Caco-2 (cell line): ENCODE measurements at regions of chr1 and their contacts with region 1.

Region 1: GRCh38 chr1:67149179-67149770 is 14.5 kb upstream of the C1orf141 start:
- DNase-seq: peak; percentile 64 to 68
- H3K4me3 ChIP-seq: no peak overlapping the region
- H3K4me3 Mint-ChIP-seq: no peak overlapping the region
- H3K27ac Mint-ChIP-seq: no peak overlapping the region
- H3K4me1 ChIP-seq: peaks cover 7% of the 10 kb centered on the region; the same call in 1 of the 2 replicates
- H3K4me1 Mint-ChIP-seq: no peaks in the 10 kb centered on the region
- H3K27me3 ChIP-seq: no peaks in the 10 kb centered on the region
- H3K27me3 Mint-ChIP-seq: peaks cover 8% of the 10 kb centered on the region
- CTCF ChIP-seq: peak; percentile 55 to 61

Region 2: GRCh38 chr1:66996018-66996682 is 153.1 kb before region 1 on chr1:
- CTCF ChIA-PET with region 1: interaction called, 43 read pairs
- POLR2A ChIA-PET with region 1: interaction called, 3 read pairs
- intact Hi-C with region 1: loop called (anchors 1 kb)
- DNase-seq: peak; percentile 42
- H3K4me3 ChIP-seq: no peak overlapping the region
- H3K4me3 Mint-ChIP-seq: no peak overlapping the region
- H3K27ac Mint-ChIP-seq: no peak overlapping the region
- H3K4me1 ChIP-seq: no peaks in the 10 kb centered on the region
- H3K4me1 Mint-ChIP-seq: no peaks in the 10 kb centered on the region
- H3K27me3 ChIP-seq: no peaks in the 10 kb centered on the region
- H3K27me3 Mint-ChIP-seq: no peaks in the 10 kb centered on the region
- CTCF ChIP-seq: peak; percentile 43 to 62

Region 3: DNA sequence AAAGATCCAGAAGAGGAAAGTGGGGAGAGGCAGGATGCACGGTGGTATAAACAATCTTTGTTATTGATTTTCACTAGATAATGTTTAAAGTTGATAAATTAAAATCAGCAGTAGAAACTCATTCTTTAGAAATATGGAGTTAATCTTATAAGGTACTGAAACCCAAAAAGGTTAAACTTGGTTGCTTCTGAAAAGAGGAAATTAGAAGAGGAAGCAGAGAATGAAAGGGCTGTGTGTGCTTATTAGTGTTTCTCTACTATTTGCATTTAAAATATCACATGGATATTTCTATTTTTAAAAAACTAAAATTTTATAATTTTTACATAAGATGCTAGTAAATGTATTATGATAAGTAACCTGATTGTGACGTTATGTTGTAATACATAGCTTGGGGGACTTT is 38.9 kb before region 1 on chr1:
- CTCF ChIA-PET with region 1: no interaction called
- POLR2A ChIA-PET with region 1: no interaction called
- intact Hi-C with region 1: no loop called
- DNase-seq: no peak
- H3K4me3 ChIP-seq: no peak overlapping the region
- H3K4me3 Mint-ChIP-seq: no peak overlapping the region
- H3K27ac Mint-ChIP-seq: no peak overlapping the region
- H3K4me1 ChIP-seq: no peaks in the 10 kb centered on the region
- H3K4me1 Mint-ChIP-seq: no peaks in the 10 kb centered on the region
- H3K27me3 ChIP-seq: no peaks in the 10 kb centered on the region
- H3K27me3 Mint-ChIP-seq: no peaks in the 10 kb centered on the region
- CTCF ChIP-seq: no peak

Region 4: DNA sequence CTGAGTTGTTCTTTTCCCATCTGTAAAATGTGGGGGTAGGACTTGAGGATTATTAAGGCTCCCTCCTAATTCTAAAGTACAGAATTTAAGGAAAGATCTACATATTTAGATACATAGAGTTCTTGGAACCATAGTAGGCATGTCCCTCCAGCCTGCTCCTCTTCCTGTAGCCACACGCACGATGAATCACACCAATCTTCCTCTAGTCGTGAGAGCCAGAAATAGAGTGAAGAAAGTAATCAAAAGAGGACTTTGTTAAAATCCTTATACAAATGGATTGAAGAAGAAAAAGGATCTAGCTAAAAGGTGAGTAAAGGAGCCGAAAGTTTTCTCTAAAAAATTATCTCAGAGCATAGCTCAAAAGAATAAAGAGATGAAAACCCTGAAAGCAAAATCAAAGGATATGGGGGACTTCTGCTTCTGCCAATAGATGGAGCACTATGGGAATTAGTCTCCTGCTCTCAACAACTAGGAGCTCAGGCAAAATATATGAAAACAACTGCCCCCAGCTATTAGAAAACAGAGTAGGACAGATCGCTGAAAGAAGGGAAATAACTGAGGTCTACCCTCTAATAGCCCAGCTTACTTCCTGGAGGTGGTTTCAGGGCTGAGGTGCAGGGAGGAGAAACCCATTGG is 23.0 kb before region 1 on chr1:
- CTCF ChIA-PET with region 1: interaction called, 6 read pairs
- POLR2A ChIA-PET with region 1: no interaction called
- intact Hi-C with region 1: loop called (anchors 1 kb)
- DNase-seq: no peak
- H3K4me3 ChIP-seq: no peak overlapping the region
- H3K4me3 Mint-ChIP-seq: no peak overlapping the region
- H3K27ac Mint-ChIP-seq: no peak overlapping the region
- H3K4me1 ChIP-seq: peaks cover 13% of the 10 kb centered on the region
- H3K4me1 Mint-ChIP-seq: no peaks in the 10 kb centered on the region
- H3K27me3 ChIP-seq: no peaks in the 10 kb centered on the region
- H3K27me3 Mint-ChIP-seq: no peaks in the 10 kb centered on the region
- CTCF ChIP-seq: no peak